Mammary epithelial cell (primary cell): ENCODE measurements at regions of chr2 and their contacts with region 1.

Region 1: GRCh38 chr2:181677912-181678586 is 2.3 kb downstream of the NEUROD1 start:
- DNase-seq: peak; percentile 59
- H3K4me3 ChIP-seq: no peak overlapping the region
- H3K27ac ChIP-seq: no peak overlapping the region
- H3K4me1 ChIP-seq: no peaks in the 10 kb centered on the region
- H3K27me3 ChIP-seq: peaks cover 46% of the 10 kb centered on the region
- CTCF ChIP-seq: no peak

Region 2: DNA sequence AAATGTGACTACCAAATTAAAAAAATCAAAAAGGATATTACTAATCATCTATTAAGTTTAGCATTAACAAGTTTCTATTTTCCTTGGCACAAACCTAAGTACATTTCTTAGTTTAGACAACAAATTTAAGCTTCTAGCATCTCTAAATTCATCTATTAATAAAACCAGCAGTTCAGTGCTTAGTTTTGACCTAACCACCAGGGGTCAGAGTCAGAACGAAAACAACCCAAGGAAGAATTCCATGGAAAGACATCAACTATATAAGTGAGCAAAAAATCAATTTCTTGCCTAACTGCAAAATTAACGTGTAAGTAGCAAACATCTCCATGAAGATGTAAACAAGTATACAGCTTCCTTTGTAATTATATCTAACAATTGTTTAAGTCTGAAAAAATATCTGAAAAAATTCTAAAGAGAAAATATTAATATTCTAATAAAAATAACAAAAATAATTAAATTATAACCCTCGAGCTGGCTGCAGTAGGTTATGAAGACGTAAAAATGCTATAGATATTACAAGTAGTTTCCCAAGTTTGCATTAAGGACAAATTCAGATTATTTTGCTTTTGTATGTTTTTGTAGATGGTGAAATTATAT is 104.8 kb before region 1 on chr2:
- CTCF ChIA-PET with region 1: no interaction called
- dilution Hi-C with region 1: loop called (anchors 25 kb)
- in situ Hi-C with region 1: no loop called
- intact Hi-C with region 1: no loop called
- DNase-seq: peak; percentile 12
- H3K4me3 ChIP-seq: no peak overlapping the region
- H3K27ac ChIP-seq: no peak overlapping the region
- H3K4me1 ChIP-seq: peaks cover 4% of the 10 kb centered on the region
- H3K27me3 ChIP-seq: no peaks in the 10 kb centered on the region
- CTCF ChIP-seq: peak; percentile 39 to 65

Region 3: GRCh38 chr2:181742922-181743722 is 65.1 kb after region 1 on chr2:
- CTCF ChIA-PET with region 1: no interaction called
- dilution Hi-C with region 1: no loop called
- in situ Hi-C with region 1: no loop called
- intact Hi-C with region 1: no loop called
- DNase-seq: peak; percentile 55
- H3K4me3 ChIP-seq: no peak overlapping the region
- H3K27ac ChIP-seq: no peak overlapping the region
- H3K4me1 ChIP-seq: peaks cover 12% of the 10 kb centered on the region
- H3K27me3 ChIP-seq: no peaks in the 10 kb centered on the region
- CTCF ChIP-seq: peak; percentile 56 to 58

Region 4: DNA sequence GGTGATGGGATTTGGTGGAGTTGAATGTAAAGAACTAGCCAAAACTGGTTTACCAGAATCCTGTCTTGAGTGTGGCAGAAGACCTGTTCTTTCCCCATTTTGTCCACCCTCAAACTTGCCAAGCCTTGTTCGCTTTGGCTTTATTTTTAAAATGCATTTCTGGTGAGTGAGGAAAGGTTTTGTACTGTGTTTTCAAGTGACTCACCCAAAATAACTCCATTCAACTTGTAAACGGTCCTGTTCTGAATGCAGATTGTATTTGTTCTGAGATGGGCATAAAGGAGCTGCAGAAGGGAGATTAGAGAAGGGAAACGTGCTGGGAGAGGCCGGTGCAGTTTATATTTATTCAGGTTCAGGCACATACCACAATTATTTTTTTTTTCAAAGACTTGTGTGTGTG is 208.1 kb after region 1 on chr2:
- CTCF ChIA-PET with region 1: no interaction called
- dilution Hi-C with region 1: no loop called
- in situ Hi-C with region 1: no loop called
- intact Hi-C with region 1: no loop called
- DNase-seq: peak; percentile 61
- H3K4me3 ChIP-seq: no peak overlapping the region
- H3K27ac ChIP-seq: no peak overlapping the region
- H3K4me1 ChIP-seq: peaks cover 17% of the 10 kb centered on the region
- H3K27me3 ChIP-seq: no peaks in the 10 kb centered on the region
- CTCF ChIP-seq: no peak